OCI-LY7 (cell line): ENCODE measurements at regions of chr6 and their contacts with region 1.

Region 1: DNA sequence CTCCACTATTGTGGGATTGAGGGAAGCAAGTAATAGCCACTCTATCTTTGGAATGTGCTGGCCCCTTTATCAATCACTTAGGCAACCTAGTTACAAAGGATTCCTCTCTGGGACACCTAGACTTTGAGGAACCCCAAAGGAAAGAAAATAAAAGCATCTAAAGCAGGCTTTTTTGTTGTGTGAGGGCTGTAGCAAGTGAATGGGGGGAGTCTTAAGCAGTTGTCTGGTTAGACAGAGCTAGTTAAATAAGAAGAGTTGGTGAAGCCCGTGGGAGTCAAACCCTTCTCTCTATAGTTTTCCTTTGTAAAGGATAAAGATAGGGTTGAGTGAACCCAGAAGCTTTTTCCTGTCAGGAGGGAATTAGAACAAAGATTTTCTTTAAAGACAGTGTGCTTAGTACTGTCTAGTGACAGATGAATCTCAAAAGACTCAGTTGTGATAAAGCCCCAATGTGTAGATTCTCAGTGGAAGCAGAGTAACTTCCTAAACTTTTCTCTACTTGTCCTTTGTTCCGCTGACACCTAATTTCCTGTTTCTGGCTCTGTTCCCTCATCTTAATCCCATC is 63.3 kb downstream of the HDGFL1 start:
- DNase-seq: no peak
- H3K4me3 ChIP-seq: no peak overlapping the region
- H3K27ac ChIP-seq: no peak overlapping the region
- H3K4me1 ChIP-seq: no peaks in the 10 kb centered on the region
- CTCF ChIP-seq: no peak

Region 2: DNA sequence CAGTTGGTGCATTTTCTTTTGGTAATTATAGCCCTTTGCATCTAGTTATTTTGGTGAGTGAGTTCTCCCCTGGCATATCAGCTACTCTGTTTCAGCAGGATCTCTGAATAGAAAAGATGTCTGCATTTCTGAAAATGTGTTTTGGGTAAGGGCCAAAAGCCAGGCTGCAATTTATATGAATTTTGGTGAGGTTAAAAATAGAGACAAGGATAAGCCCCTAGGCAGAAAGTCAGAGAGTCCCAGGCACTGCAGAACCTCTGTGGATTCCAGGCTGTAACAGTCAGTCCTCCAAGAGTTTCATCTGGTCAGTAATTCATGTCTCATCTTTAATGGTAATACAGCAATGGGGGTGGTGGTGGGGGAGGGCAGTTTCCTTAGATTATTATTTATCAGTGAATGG is 10.3 kb before region 1 on chr6:
- CTCF ChIA-PET with region 1: no interaction called
- POLR2A ChIA-PET with region 1: no interaction called
- intact Hi-C with region 1: loop called (anchors 1 kb)
- DNase-seq: no peak
- H3K4me3 ChIP-seq: no peak overlapping the region
- H3K27ac ChIP-seq: no peak overlapping the region
- H3K4me1 ChIP-seq: no peaks in the 10 kb centered on the region
- CTCF ChIP-seq: no peak

Region 3: DNA sequence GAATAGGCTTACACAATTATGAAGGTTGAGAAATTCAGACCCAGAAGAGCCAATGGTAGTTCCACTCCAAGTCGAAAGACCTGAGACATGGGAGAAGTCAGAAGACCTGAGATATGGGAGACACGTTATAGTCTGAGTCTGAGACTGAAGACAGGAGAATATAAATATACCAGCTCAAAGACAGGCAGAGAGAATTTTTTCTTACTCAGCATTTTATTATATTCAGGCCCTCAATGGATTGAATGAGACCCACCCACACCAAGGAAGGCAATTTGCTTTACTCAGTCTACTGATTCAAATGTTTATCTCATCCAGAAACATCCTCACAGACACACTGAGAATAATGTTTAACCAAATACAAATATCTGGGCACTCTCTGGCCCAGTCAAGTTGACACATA is 630.2 kb after region 1 on chr6:
- CTCF ChIA-PET with region 1: no interaction called
- POLR2A ChIA-PET with region 1: no interaction called
- intact Hi-C with region 1: no loop called
- DNase-seq: no peak
- H3K4me3 ChIP-seq: no peak overlapping the region
- H3K27ac ChIP-seq: no peak overlapping the region
- H3K4me1 ChIP-seq: no peaks in the 10 kb centered on the region
- CTCF ChIP-seq: no peak